GM12878 (cell line): ENCODE measurements at regions of chr1 and their contacts with region 1.

Region 1: DNA sequence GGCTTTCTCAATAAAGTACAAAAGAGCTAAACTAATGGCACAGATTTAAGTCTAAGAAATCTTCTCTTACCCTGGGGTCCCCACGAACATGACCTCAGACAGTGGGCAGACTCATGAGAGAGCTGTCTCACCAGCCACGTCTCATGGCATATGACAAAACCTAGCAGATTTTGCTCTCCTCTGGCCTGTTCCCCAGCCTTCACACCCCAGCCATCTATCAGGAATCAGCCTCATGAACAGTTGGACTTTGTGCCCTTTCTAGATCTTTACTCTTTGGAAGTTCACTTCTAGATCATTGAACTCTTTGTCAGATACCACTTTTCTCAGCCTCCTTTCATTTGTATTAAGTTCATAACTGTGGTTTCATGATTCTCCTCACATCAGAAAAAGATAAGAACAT is 14.2 kb upstream of the HSD3B1 start:
- DNase-seq: no peak
- ATAC-seq: no peak
- H3K4me3 ChIP-seq: no peak overlapping the region
- H3K27ac ChIP-seq: no peak overlapping the region
- H3K4me1 ChIP-seq: no peaks in the 10 kb centered on the region
- H3K27me3 ChIP-seq: no peaks in the 10 kb centered on the region
- CTCF ChIP-seq: no peak
- EP300 ChIP-seq: no peak
- POLR2A ChIP-seq: no peak
- RAD21 ChIP-seq: no peak

Region 2: GRCh38 chr1:119531624-119532323 is 39.0 kb after region 1 on chr1:
- CTCF ChIA-PET with region 1: no interaction called
- POLR2A ChIA-PET with region 1: no interaction called
- RAD21 ChIA-PET with region 1: no interaction called
- SMC1A ChIA-PET with region 1: no interaction called
- in situ Hi-C with region 1: loop called (anchors 5 kb)
- intact Hi-C with region 1: no loop called
- DNase-seq: no peak
- ATAC-seq: no peak
- H3K4me3 ChIP-seq: no peak overlapping the region
- H3K27ac ChIP-seq: no peak overlapping the region
- H3K4me1 ChIP-seq: no peaks in the 10 kb centered on the region
- H3K27me3 ChIP-seq: no peaks in the 10 kb centered on the region; a peak in 1 of 4 replicates
- CTCF ChIP-seq: no peak
- EP300 ChIP-seq: no peak
- POLR2A ChIP-seq: no peak
- RAD21 ChIP-seq: no peak